Activated CD4-positive, alpha-beta memory T cell treated with anti-CD3 and anti-CD28 coated beads for 36 hours (primary cell): ENCODE measurements at regions of chr1 and their contacts with region 1.

Region 1: GRCh38 chr1:114757455-114758250 is at the start of gene CSDE1:
- DNase-seq: peak; percentile 98
- H3K4me3 Mint-ChIP-seq: peak within 1 kb of the TSS; percentile 98
- H3K27ac Mint-ChIP-seq: peak within 1 kb of the TSS; percentile 100
- H3K4me1 Mint-ChIP-seq: peaks cover 47% of the 10 kb centered on the region
- H3K27me3 Mint-ChIP-seq: no peaks in the 10 kb centered on the region
- total RNA-seq, gene CSDE1: 452 to 464 TPM

Region 2: GRCh38 chr1:113389953-113390834 is 1367.5 kb before region 1 on chr1 and contains the start of gene MAGI3:
- CTCF ChIA-PET with region 1: no interaction called
- POLR2A ChIA-PET with region 1: no interaction called
- intact Hi-C with region 1: loop called (anchors 10 kb)
- DNase-seq: peak; percentile 97
- H3K4me3 Mint-ChIP-seq: peak within 1 kb of the TSS; percentile 92
- H3K27ac Mint-ChIP-seq: peak within 1 kb of the TSS; percentile 77
- H3K4me1 Mint-ChIP-seq: peaks cover 24% of the 10 kb centered on the region
- H3K27me3 Mint-ChIP-seq: no peaks in the 10 kb centered on the region
- total RNA-seq, gene MAGI3: 7.3 to 7.4 TPM

Region 3: DNA sequence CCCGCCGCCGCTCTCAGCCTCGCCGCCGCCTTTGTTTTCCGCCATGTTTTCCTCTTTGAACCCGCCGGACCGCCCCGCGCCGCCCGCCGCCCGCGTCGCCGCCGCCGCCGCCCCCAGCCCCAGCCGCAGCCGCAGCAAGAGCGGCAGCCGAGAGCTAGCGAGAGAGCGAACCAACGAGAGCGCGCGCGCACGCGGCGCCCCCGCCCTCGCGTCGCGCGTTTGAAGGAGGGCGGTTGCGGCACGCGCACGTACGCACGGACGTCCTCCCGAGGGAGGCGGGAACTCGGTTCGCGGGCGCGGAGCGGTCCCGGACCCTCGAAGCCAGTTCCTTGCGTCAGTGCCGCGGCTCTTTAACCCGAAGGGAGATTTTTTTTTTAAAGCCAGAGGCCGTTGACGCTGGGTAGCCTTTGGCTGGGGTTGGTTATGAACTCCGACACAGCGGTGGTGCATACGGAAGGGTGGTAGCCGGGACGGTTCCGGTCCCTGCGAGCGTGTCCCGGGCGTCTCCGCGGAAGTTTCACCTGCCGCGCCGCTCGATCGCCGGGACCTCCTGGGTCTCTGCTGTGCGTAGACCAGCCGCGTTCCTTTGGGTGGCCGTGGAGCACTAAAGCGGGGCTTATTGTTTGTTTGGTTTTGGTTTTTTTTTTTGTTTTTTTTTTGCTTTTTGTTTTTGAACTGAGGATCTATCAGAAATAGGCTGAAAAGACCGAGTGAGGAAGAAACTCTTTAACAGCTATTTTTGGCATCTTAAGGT is 246.4 kb before region 1 on chr1 and contains the start of gene TRIM33:
- CTCF ChIA-PET with region 1: no interaction called
- POLR2A ChIA-PET with region 1: interaction called, 4 read pairs
- intact Hi-C with region 1: loop called (anchors 1 kb)
- DNase-seq: peak; percentile 95
- H3K4me3 Mint-ChIP-seq: peak within 1 kb of the TSS; percentile 91
- H3K27ac Mint-ChIP-seq: peak within 1 kb of the TSS; percentile 98
- H3K4me1 Mint-ChIP-seq: peaks cover 41% of the 10 kb centered on the region
- H3K27me3 Mint-ChIP-seq: no peaks in the 10 kb centered on the region
- total RNA-seq, gene TRIM33: 26.9 to 27.9 TPM

Region 4: GRCh38 chr1:114670083-114671010 is 87.3 kb before region 1 on chr1:
- CTCF ChIA-PET with region 1: no interaction called
- POLR2A ChIA-PET with region 1: no interaction called
- intact Hi-C with region 1: loop called (anchors 1 kb)
- DNase-seq: peak; percentile 92
- H3K4me3 Mint-ChIP-seq: peak overlapping the region; percentile 88
- H3K27ac Mint-ChIP-seq: no peak overlapping the region
- H3K4me1 Mint-ChIP-seq: peaks cover 7% of the 10 kb centered on the region
- H3K27me3 Mint-ChIP-seq: peaks cover 2% of the 10 kb centered on the region

Region 5: DNA sequence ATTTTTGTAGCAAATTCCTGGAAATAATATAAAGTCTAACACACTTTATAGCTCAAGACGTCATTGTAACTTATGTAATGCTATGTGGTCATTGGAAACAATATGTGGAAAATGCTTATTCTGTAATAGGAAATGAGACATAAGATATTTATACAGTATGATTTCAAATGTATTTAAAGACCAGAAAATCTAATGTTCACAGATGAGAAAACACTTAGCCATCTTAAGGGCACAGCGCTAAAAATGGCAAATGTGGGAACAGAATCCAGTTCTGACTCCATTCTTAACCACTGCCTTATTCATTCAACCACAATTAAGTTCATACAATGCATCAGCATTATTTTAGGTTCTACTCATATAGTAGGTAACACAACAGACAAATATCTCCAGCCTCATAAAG is 12.4 kb before region 1 on chr1:
- CTCF ChIA-PET with region 1: interaction called, 7 read pairs
- POLR2A ChIA-PET with region 1: interaction called, 12 read pairs
- intact Hi-C with region 1: loop called (anchors 1 kb)
- DNase-seq: peak; percentile 24
- H3K4me3 Mint-ChIP-seq: no peak overlapping the region
- H3K27ac Mint-ChIP-seq: peak overlapping the region; percentile 64
- H3K4me1 Mint-ChIP-seq: peaks cover 79% of the 10 kb centered on the region
- H3K27me3 Mint-ChIP-seq: no peaks in the 10 kb centered on the region

Region 6: DNA sequence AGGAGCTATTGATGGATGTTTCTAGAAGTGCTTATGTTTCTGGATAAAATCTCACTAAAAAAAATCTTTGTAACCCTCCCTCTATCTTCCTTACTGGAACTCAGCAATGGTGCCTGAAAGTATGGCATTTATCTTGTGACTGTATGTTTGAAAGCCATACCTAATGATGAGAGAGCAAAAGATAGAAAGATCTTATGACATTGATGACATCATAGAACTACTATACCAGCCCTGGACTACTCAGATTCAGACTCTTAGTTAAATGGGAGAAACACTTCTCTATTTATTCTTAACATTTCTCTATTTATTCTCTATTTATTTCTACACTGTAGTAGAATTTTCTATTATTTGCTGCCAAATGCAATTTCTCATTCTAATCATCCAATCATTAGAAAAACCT is 64.3 kb after region 1 on chr1:
- CTCF ChIA-PET with region 1: no interaction called
- POLR2A ChIA-PET with region 1: no interaction called
- intact Hi-C with region 1: no loop called
- DNase-seq: no peak
- H3K4me3 Mint-ChIP-seq: no peak overlapping the region
- H3K27ac Mint-ChIP-seq: no peak overlapping the region
- H3K4me1 Mint-ChIP-seq: no peaks in the 10 kb centered on the region
- H3K27me3 Mint-ChIP-seq: peaks cover 4% of the 10 kb centered on the region

Region 7: GRCh38 chr1:115062542-115063011 is 304.9 kb after region 1 on chr1:
- CTCF ChIA-PET with region 1: no interaction called
- POLR2A ChIA-PET with region 1: no interaction called
- intact Hi-C with region 1: loop called (anchors 2 kb)
- DNase-seq: peak; percentile 95
- H3K4me3 Mint-ChIP-seq: no peak overlapping the region
- H3K27ac Mint-ChIP-seq: peak overlapping the region; percentile 80
- H3K4me1 Mint-ChIP-seq: peaks cover 43% of the 10 kb centered on the region
- H3K27me3 Mint-ChIP-seq: no peaks in the 10 kb centered on the region